ENCODE measurements at regions of chr19 and their contacts with region 1.

Region 1: GRCh38 chr19:48489608-48490216 is 20.5 kb downstream of the CYTH2 start:
- DNase-seq: peak; percentile 86
- ATAC-seq: peak; percentile 37
- H3K4me3 Mint-ChIP-seq: no peak overlapping the region
- H3K27ac Mint-ChIP-seq: no peak overlapping the region
- H3K4me1 Mint-ChIP-seq: peaks cover 25% of the 10 kb centered on the region
- H3K27me3 Mint-ChIP-seq: peaks cover 17% of the 10 kb centered on the region
- CTCF ChIP-seq: peak; percentile 97

Region 2: DNA sequence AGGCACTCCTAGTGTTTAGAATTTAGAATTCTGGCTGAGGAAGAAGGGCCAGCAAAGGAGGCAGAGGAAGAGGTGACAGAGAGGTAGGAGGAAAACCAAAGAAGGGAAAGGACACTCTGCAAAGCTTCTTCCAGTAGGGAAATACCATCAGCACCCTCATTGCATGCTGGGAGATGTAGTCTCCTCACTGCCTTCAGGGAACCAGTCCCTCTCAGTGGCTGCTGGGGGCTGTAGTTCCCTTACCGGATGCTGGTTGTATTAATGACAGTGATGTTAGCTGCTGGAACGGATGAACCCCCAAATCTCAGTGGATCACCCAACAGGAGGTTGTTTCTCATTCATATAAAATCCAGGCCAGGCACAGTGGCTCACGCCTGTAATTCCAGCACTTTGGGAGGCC is 86.1 kb before region 1 on chr19:
- CTCF ChIA-PET with region 1: no interaction called
- POLR2A ChIA-PET with region 1: no interaction called
- intact Hi-C with region 1: no loop called
- DNase-seq: peak; percentile 78
- ATAC-seq: peak; percentile 75
- H3K4me3 Mint-ChIP-seq: no peak overlapping the region
- H3K27ac Mint-ChIP-seq: peak overlapping the region; percentile 62
- H3K4me1 Mint-ChIP-seq: peaks cover 19% of the 10 kb centered on the region
- H3K27me3 Mint-ChIP-seq: peaks cover 4% of the 10 kb centered on the region
- CTCF ChIP-seq: no peak

Region 3: GRCh38 chr19:48458016-48458415 is 31.7 kb before region 1 on chr19:
- CTCF ChIA-PET with region 1: interaction called, 10 read pairs
- POLR2A ChIA-PET with region 1: no interaction called
- intact Hi-C with region 1: no loop called
- DNase-seq: no peak
- ATAC-seq: no peak
- H3K4me3 Mint-ChIP-seq: no peak overlapping the region
- H3K27ac Mint-ChIP-seq: no peak overlapping the region
- H3K4me1 Mint-ChIP-seq: peaks cover 10% of the 10 kb centered on the region
- H3K27me3 Mint-ChIP-seq: no peaks in the 10 kb centered on the region
- CTCF ChIP-seq: no peak

Region 4: DNA sequence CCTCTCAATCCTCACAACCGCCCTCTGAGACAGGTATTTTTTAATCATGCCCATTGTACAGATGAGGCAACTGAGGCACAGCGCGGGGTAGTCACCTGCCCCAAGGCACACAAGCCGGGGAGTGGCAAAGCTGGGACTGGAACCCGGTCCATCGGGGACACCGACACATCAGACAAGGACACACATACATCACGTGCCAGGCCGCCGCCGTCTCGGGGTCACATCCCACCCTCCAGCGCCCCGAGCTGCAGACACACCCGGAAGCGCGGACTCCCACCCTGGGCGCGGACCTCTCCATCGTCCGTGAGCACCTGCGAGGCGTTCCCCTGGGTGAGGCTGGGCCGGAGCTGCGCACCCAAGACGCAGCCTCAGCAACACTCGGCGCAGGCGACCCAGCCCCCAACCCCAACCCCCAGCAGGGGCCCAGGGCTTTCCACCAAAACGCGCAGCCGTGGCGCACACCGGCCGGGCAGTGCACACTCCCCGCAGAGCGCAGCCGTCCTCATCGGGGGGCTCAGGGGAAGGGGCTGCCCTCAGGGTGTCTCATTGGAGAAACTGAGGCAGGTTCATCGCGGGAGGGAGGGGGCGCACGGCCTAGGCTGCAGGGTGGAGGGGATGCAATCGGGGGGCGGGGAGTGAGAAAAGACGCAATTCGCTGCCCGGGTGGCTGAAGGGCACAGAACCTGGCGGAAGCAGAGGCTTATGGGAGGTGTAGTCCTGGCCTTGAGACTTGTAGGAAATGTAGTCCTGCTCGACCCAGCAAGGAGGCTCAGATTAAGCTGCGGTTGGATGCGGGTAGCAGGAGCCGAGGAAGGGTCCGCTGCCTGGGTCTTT is 23.8 kb after region 1 on chr19:
- CTCF ChIA-PET with region 1: interaction called, 37 read pairs
- POLR2A ChIA-PET with region 1: interaction called, 3 read pairs
- intact Hi-C with region 1: no loop called
- DNase-seq: peak; percentile 88
- ATAC-seq: peak; percentile 71
- H3K4me3 Mint-ChIP-seq: no peak overlapping the region
- H3K27ac Mint-ChIP-seq: peak overlapping the region; percentile 82
- H3K4me1 Mint-ChIP-seq: peaks cover 19% of the 10 kb centered on the region
- H3K27me3 Mint-ChIP-seq: no peaks in the 10 kb centered on the region
- CTCF ChIP-seq: no peak

Region 5: DNA sequence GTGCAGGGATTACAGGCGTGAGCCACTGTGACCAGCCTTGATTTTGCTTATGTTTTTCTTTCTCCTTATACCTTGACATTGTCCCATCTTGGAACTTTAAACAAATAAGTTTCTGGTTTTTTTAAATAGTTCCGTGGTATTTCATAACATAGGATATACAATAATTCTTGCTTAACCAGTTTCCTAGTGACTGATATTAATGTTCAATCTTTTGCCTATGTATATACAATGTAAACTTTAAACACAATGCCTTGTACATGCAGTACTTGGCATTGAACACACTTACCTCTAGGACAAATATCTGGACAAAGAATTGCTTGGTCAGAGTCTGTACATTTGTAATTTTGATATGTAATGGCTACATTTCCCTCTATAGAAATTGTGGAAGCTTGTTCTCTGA is 92.5 kb after region 1 on chr19:
- CTCF ChIA-PET with region 1: interaction called, 60 read pairs
- POLR2A ChIA-PET with region 1: interaction called, 3 read pairs
- intact Hi-C with region 1: no loop called
- DNase-seq: no peak
- ATAC-seq: no peak
- H3K4me3 Mint-ChIP-seq: no peak overlapping the region
- H3K27ac Mint-ChIP-seq: no peak overlapping the region
- H3K4me1 Mint-ChIP-seq: peaks cover 5% of the 10 kb centered on the region
- H3K27me3 Mint-ChIP-seq: no peaks in the 10 kb centered on the region
- CTCF ChIP-seq: no peak

Region 6: DNA sequence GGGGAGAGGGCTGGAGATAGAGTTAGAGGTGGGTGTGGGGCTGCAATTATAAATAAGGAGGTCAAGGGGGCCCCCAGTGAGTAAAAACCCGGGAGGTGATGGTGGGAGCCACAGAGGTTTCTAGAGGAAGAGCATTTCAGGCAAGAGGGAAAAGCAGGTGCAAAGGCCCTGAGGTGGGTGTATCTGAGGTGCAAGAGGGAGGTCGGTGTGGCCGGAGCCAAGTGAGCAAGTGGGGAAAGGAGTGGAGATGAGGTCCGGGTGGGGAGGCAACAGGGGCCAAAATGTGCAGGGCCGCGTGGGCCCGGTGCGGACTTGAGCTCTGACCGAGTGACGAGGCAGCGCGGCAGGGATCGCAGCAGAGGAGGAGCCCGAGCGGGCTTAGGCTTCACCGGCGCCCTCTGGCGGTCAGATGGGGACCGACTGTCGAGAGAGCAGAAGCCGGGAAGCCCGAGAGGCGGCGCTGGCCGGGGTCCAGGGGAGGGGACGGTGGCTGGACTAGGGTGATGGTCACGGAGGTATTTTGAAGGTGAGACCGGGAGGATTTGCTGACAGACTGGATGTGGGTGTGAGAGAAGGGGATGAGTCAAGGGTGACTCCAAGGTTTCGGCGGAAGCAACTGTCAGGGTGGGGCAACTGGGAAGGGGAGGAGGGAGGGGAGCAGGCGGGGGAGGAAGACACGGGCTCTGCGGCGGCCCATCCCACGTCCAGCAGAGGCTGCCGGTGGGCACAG is 99.1 kb after region 1 on chr19:
- CTCF ChIA-PET with region 1: interaction called, 60 read pairs
- POLR2A ChIA-PET with region 1: no interaction called
- intact Hi-C with region 1: no loop called
- DNase-seq: peak; percentile 94
- ATAC-seq: peak; percentile 87
- H3K4me3 Mint-ChIP-seq: peak overlapping the region; percentile 38
- H3K27ac Mint-ChIP-seq: peak overlapping the region; percentile 36
- H3K4me1 Mint-ChIP-seq: peaks cover 15% of the 10 kb centered on the region
- H3K27me3 Mint-ChIP-seq: no peaks in the 10 kb centered on the region
- CTCF ChIP-seq: peak; percentile 88

Region 7: DNA sequence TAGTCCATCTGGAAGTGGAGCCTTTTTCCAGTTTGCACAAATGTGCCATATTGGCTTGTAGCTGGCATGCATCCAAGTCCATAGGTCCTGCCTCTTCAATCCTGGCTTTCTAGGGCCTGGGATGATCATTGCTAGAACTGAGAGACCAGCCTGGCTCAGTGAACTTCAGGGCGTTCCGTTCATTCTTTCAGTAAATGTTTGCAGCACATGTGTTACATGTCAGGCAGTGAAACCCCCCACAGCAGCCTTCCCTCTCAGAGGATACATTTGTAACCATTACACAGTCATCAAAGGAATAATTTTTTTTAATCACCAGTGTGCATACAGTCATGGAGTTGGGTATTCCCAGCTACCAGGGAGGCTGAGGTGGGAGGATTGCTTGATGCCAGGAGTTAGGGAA is 215.7 kb after region 1 on chr19:
- CTCF ChIA-PET with region 1: no interaction called
- POLR2A ChIA-PET with region 1: no interaction called
- intact Hi-C with region 1: no loop called
- DNase-seq: no peak
- ATAC-seq: no peak
- H3K4me3 Mint-ChIP-seq: no peak overlapping the region
- H3K27ac Mint-ChIP-seq: no peak overlapping the region
- H3K4me1 Mint-ChIP-seq: no peaks in the 10 kb centered on the region
- H3K27me3 Mint-ChIP-seq: no peaks in the 10 kb centered on the region
- CTCF ChIP-seq: no peak

Measured in activated CD8-positive, alpha-beta T cell treated with anti-CD3 and anti-CD28 coated beads for 36 hours (primary cell).